HepG2 (cell line): ENCODE measurements at regions of chr17 and their contacts with region 1.

Region 1: GRCh38 chr17:29124117-29124924 is 55.9 kb downstream of the MYO18A start:
- DNase-seq: peak; percentile 71
- ATAC-seq: peak; percentile 86
- H3K4me3 ChIP-seq: no peak overlapping the region
- H3K27ac ChIP-seq: no peak overlapping the region
- H3K4me1 ChIP-seq: no peaks in the 10 kb centered on the region
- H3K27me3 ChIP-seq: no peaks in the 10 kb centered on the region
- CTCF ChIP-seq: peak; percentile 82
- EP300 ChIP-seq: no peak
- POLR2A ChIP-seq: no peak
- RAD21 ChIP-seq: peak; percentile 68

Region 2: GRCh38 chr17:29059281-29059680 is 65.0 kb before region 1 on chr17:
- CTCF ChIA-PET with region 1: no interaction called
- POLR2A ChIA-PET with region 1: no interaction called
- in situ Hi-C with region 1: no loop called
- intact Hi-C with region 1: no loop called
- DNase-seq: peak; percentile 28
- ATAC-seq: no peak
- H3K4me3 ChIP-seq: no peak overlapping the region
- H3K27ac ChIP-seq: no peak overlapping the region
- H3K4me1 ChIP-seq: no peaks in the 10 kb centered on the region
- H3K27me3 ChIP-seq: no peaks in the 10 kb centered on the region
- CTCF ChIP-seq: no peak
- EP300 ChIP-seq: no peak
- POLR2A ChIP-seq: no peak
- RAD21 ChIP-seq: no peak

Region 3: DNA sequence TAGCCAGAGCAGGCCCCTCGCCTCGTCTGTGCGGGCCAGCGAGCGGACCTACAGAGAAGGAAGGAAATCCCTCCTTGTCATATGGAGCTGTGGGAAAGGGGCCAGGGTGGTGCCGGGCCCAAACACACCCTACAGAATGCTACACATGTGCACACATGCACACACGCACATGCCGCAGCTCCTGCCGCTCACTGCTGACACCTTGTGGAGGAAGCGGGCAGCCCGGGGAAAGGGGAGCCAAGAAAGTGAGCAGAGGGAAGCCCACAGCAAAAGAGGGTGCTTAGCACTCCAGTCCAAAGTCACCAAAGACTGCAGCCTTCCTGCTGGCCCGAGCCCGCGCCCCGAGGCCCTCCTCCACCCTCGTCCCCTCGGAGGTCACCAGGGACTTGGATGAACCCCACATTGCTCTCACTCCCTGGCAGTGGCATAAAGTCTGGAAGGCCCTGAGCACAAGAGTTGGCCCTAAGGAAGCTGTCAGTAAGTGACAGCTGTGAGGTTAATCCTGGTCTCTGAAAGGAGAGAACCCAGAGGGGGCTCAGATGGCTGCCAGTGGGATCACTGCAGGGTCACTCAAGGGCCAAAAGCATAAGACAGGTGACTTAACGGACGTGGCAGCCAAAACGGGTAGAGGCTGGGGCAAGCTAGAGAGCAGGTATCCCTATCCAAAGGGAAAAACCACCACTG is 12.4 kb before region 1 on chr17:
- CTCF ChIA-PET with region 1: no interaction called
- POLR2A ChIA-PET with region 1: no interaction called
- in situ Hi-C with region 1: no loop called
- intact Hi-C with region 1: no loop called
- DNase-seq: peak; percentile 41
- ATAC-seq: peak; percentile 74
- H3K4me3 ChIP-seq: no peak overlapping the region
- H3K27ac ChIP-seq: no peak overlapping the region
- H3K4me1 ChIP-seq: peaks cover 16% of the 10 kb centered on the region
- H3K27me3 ChIP-seq: no peaks in the 10 kb centered on the region
- CTCF ChIP-seq: peak; percentile 95
- EP300 ChIP-seq: no peak
- POLR2A ChIP-seq: no peak
- RAD21 ChIP-seq: peak; percentile 80

Region 4: GRCh38 chr17:29143894-29144293 is 19.6 kb after region 1 on chr17:
- CTCF ChIA-PET with region 1: interaction called, 13 read pairs
- POLR2A ChIA-PET with region 1: interaction called, 5 read pairs
- in situ Hi-C with region 1: no loop called
- intact Hi-C with region 1: loop called (anchors 1 kb)
- DNase-seq: peak; percentile 69
- ATAC-seq: peak; percentile 68
- H3K4me3 ChIP-seq: no peak overlapping the region
- H3K27ac ChIP-seq: no peak overlapping the region
- H3K4me1 ChIP-seq: peaks cover 43% of the 10 kb centered on the region
- H3K27me3 ChIP-seq: no peaks in the 10 kb centered on the region
- CTCF ChIP-seq: peak; percentile 80
- EP300 ChIP-seq: no peak
- POLR2A ChIP-seq: no peak
- RAD21 ChIP-seq: peak; percentile 51

Region 5: DNA sequence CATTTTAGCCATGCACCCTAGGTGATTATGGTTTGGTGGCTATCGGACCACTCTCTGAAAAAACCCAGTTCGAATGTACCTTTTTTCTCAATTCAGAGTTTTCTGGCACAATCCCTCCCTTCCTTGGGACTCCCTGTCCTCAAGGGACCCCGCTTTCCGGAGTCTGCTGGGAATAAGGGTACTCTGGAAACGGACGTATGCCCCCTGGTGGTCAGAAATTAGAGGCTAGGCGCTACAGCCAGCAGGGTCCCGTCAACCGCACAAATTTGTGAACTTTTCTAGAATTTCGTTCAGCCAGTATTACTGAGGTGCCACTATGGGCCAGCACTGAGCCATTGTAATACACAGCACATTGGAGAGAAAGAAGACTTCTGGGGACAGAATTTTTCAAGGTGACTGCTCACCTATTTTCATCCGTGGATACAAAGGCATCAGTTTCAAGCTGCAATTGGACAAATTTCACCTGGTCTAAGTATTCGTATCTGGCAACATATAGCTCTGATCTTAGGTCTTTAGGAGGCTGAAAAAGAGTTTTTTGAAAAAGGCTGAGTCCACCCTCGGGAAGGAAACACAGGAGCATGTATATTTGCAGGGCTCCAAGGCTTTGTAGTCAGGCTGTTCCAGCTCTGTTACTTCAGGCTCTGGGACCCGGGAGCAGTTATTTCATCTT is 95.2 kb after region 1 on chr17:
- CTCF ChIA-PET with region 1: interaction called, 16 read pairs
- POLR2A ChIA-PET with region 1: no interaction called
- in situ Hi-C with region 1: no loop called
- intact Hi-C with region 1: no loop called
- DNase-seq: peak; percentile 77
- ATAC-seq: peak; percentile 97
- H3K4me3 ChIP-seq: no peak overlapping the region
- H3K27ac ChIP-seq: no peak overlapping the region
- H3K4me1 ChIP-seq: peaks cover 10% of the 10 kb centered on the region
- H3K27me3 ChIP-seq: peaks cover 1 to 8% of the 10 kb centered on the region in 2 experiments; a peak in 3 of 5 replicates
- CTCF ChIP-seq: peak; percentile 91
- EP300 ChIP-seq: no peak
- POLR2A ChIP-seq: no peak
- RAD21 ChIP-seq: peak; percentile 74